ENCODE measurements at regions of chr13 and their contacts with region 1.

Region 1: GRCh38 chr13:104571161-104571892 is 1505.1 kb upstream of the SLC10A2 start:
- DNase-seq: peak; percentile 79
- ATAC-seq: peak; percentile 97
- H3K4me3 ChIP-seq: peak overlapping the region; percentile 19 to 51; a peak in 3 of 4 replicates
- H3K27ac ChIP-seq: no peak overlapping the region
- H3K4me1 ChIP-seq: peaks cover 0 to 12% of the 10 kb centered on the region in 2 experiments; a peak in 2 of 4 replicates
- H3K27me3 ChIP-seq: no peaks in the 10 kb centered on the region
- CTCF ChIP-seq: peak; percentile 35 to 76 (median 74); a peak in 5 of 6 replicates
- POLR2A ChIP-seq: no peak
- RAD21 ChIP-seq: peak; percentile 84

Region 2: DNA sequence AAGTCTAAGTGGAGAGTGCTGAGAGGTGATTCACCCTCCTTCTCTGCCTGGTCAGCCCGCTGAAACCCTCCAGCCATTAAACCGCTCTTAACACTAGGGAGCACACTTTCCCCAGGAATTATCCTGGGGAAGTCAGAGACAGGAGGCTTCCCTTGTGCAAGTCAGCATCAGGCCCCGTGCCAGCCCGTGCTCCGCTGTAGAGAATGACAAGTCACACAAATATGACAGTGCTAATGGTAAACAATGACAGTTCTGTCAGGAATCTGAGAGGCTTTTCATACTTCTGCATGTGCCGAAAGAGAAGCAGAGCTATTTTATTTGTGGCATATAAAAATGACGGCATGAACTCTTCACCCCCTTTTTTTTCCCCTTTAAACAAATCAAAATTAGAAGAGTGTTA is 688.2 kb before region 1 on chr13:
- CTCF ChIA-PET with region 1: no interaction called
- POLR2A ChIA-PET with region 1: no interaction called
- RAD21 ChIA-PET with region 1: no interaction called
- intact Hi-C with region 1: loop called (anchors 10 kb)
- DNase-seq: peak; percentile 90
- ATAC-seq: peak; percentile 99
- H3K4me3 ChIP-seq: 0 out of 4 replicates have a peak overlapping the region, but pooled peaks of 1 of the 2 experiments have one; percentile 13
- H3K27ac ChIP-seq: no peak overlapping the region
- H3K4me1 ChIP-seq: peaks cover 0 to 9% of the 10 kb centered on the region in 2 experiments; a peak in 1 of 4 replicates
- H3K27me3 ChIP-seq: no peaks in the 10 kb centered on the region
- CTCF ChIP-seq: peak; percentile 39 to 71 (median 55); a peak in 4 of 6 replicates
- POLR2A ChIP-seq: no peak
- RAD21 ChIP-seq: peak; percentile 91

Region 3: GRCh38 chr13:105721016-105721415 is 1149.7 kb after region 1 on chr13:
- CTCF ChIA-PET with region 1: no interaction called
- POLR2A ChIA-PET with region 1: no interaction called
- RAD21 ChIA-PET with region 1: no interaction called
- intact Hi-C with region 1: loop called (anchors 10 kb)
- DNase-seq: no peak
- ATAC-seq: no peak
- H3K4me3 ChIP-seq: no peak overlapping the region
- H3K27ac ChIP-seq: no peak overlapping the region
- H3K4me1 ChIP-seq: no peaks in the 10 kb centered on the region
- H3K27me3 ChIP-seq: no peaks in the 10 kb centered on the region
- CTCF ChIP-seq: no peak
- POLR2A ChIP-seq: no peak
- RAD21 ChIP-seq: no peak

Region 4: GRCh38 chr13:106151056-106151699 is 1579.9 kb after region 1 on chr13:
- CTCF ChIA-PET with region 1: no interaction called
- POLR2A ChIA-PET with region 1: no interaction called
- RAD21 ChIA-PET with region 1: no interaction called
- intact Hi-C with region 1: loop called (anchors 1 kb)
- DNase-seq: peak; percentile 87
- ATAC-seq: peak; percentile 90
- H3K4me3 ChIP-seq: peak overlapping the region in 1 of 2 experiments; percentile 22; a peak in 2 of 4 replicates
- H3K27ac ChIP-seq: peak overlapping the region; percentile 81
- H3K4me1 ChIP-seq: peaks cover 46 to 69% of the 10 kb centered on the region in 2 experiments
- H3K27me3 ChIP-seq: no peaks in the 10 kb centered on the region
- CTCF ChIP-seq: no peak
- POLR2A ChIP-seq: no peak
- RAD21 ChIP-seq: peak; percentile 24; the same call in 1 of the 2 replicates

Measured in HCT116 (cell line).